Psoas muscle (tissue), 8 donors: ENCODE measurements at regions of chrX and their contacts with region 1.

Region 1: DNA sequence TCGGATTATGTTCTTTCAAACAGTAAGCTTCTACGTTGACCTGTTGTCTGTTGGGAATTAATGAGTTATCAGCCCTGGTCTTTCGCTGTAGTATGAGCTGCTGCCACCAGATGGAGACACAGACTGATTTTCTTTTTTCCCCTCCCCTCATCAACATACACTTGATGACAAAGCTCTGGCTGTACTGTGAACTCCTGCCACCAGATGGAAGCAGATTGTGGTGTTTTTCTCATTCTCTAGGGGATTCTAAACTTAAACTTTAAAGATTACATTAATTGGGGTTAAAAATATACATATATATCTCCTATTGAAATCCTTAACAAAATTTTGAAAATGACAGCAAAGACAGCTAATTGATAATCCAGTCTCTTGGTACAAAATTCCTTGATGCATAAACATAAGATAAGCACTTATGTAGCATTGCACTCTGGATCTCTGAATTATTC is 44.8 kb downstream of the SMS start:
- DNase-seq: peak in 1 of 2 donors; percentile 33
- ATAC-seq: peak; percentile 89 to 97 (median 94)
- H3K4me3 ChIP-seq: no peak overlapping the region
- H3K27ac ChIP-seq: no peak overlapping the region
- H3K4me1 ChIP-seq: no peaks in the 10 kb centered on the region
- H3K27me3 ChIP-seq: no peaks in the 10 kb centered on the region
- CTCF ChIP-seq: peak; percentile 96

Region 2: DNA sequence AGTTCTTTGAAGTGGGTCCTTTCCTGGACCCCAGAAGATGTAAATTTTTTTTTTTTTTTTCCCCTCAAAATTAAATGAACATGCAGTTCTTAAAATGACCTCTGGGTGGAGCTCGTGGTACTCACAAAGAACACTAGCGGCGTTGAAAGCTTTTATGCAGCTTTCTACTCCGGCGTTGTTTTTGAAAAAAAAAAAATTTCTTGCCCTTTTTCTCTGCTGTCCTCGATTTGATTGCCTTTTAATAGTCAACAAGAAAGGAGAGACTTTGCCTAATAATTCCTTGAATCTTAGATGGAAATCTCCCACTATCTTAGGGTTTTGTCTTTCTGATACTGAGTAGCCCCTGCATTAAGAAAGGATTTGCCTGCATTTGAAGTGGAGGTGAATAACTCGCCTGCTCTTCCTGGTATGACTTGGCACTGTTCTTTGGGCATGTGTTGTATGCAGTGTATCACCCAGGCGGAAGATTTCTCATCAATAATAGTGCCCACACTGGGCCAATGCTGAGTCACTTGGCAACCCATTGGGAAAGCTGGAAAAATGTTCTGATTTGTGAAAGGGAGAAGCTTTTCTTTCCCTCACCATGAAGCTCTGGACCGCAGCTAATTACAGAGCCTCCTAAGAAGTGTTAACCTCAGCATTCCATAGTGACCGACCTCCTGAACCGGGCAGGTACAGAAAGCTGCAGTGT is 150.8 kb after region 1 on chrX:
- intact Hi-C with region 1: loop called in 1 of 2 experiments (anchors 10 kb)
- DNase-seq: no peak
- ATAC-seq: peak in 1 of 4 donors; percentile 53
- H3K4me3 ChIP-seq: no peak overlapping the region
- H3K27ac ChIP-seq: no peak overlapping the region
- H3K4me1 ChIP-seq: no peaks in the 10 kb centered on the region
- H3K27me3 ChIP-seq: peaks cover 0 to 6% (median 0%) of the 10 kb centered on the region in 3 donors
- CTCF ChIP-seq: peak; percentile 80

Region 3: GRCh38 chrX:22192417-22193060 is 207.2 kb after region 1 on chrX:
- intact Hi-C with region 1: loop called (anchors 2 to 10 kb)
- DNase-seq: peak; percentile 58 to 72
- ATAC-seq: peak; percentile 71 to 75 (median 72)
- H3K4me3 ChIP-seq: no peak overlapping the region
- H3K27ac ChIP-seq: no peak overlapping the region
- H3K4me1 ChIP-seq: no peaks in the 10 kb centered on the region
- H3K27me3 ChIP-seq: peaks cover 0 to 13% (median 0%) of the 10 kb centered on the region in 3 donors
- CTCF ChIP-seq: peak; percentile 78